GM13976 (cell line): ENCODE measurements at regions of chr3 and their contacts with region 1.

Region 1: GRCh38 chr3:132405188-132405587 is 12.1 kb upstream of the DNAJC13 start:
- DNase-seq: no peak
- CTCF ChIP-seq: no peak

Region 2: GRCh38 chr3:132253262-132253878 is 151.8 kb before region 1 on chr3:
- in situ Hi-C with region 1: loop called (anchors 10 kb)
- DNase-seq: peak; percentile 47
- CTCF ChIP-seq: peak; percentile 69

Region 3: DNA sequence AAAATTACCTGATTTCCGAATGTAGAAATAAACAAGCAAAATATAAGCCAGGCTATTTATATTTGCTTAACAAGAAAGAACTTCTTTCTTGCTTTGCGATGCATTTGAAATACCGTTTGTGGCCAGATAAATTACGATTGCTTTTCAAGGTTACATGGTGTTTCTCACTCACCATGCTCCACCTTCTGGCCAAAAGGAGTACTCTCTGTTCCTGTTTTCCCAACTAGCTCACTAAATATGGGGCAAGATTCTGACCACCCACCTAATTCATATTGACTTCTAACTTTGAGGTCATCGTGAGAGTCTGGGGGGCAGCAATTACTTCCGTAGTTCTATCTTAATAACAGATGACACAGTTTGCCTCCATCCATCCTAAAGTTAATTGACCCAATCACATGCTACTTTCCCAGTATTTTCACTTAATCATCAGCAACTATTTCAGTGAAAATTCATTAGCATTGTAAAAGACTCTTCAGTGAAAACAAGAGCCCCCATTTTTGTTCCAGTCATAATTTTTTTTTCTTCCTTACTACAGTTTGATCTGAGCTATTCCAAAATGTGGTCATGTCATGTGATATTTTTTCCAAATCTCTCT is 62.1 kb before region 1 on chr3:
- in situ Hi-C with region 1: loop called (anchors 5 kb)
- DNase-seq: peak; percentile 38
- CTCF ChIP-seq: peak; percentile 65